Activated naive CD4-positive, alpha-beta T cell treated with anti-CD3 and anti-CD28 coated beads for 36 hours (primary cell): ENCODE measurements at regions of chr9 and their contacts with region 1.

Region 1: DNA sequence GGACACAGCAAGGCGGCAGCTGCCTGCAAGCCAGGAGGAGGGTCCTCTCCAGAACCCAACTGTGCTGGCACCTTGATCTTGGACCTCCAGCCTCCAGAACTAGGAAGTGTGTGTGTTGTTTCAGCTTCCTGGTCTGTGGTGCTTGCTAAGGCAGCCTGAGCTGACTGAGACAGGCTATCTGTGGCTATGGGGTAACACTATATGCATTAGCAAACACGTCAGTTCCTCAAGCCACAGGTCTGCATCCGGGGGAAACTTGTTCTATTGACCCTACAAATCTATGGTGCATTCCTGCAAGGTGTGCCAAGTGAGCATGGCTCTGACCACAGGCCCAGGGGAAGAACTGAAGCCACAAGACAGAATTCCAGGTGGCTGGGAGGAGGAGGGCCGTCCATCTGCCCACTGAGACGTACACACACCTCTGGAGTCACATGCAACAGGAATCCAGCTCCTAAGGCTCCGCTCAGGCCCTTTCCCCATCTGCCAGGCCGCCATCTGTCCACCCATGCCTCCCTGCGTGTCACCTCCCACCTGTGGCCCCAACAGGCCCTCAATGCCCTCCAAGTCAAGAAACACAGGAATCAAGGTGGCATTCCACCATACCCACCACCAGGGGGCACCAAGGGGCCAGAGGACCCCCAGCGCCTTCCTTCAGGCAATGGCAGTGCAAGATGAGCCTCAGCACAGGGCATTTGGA is 174.9 kb downstream of the ROR2 start:
- DNase-seq: peak; percentile 78
- H3K4me3 Mint-ChIP-seq: no peak overlapping the region
- H3K27ac Mint-ChIP-seq: no peak overlapping the region
- H3K4me1 Mint-ChIP-seq: no peaks in the 10 kb centered on the region
- H3K27me3 Mint-ChIP-seq: peaks cover 11% of the 10 kb centered on the region

Region 2: DNA sequence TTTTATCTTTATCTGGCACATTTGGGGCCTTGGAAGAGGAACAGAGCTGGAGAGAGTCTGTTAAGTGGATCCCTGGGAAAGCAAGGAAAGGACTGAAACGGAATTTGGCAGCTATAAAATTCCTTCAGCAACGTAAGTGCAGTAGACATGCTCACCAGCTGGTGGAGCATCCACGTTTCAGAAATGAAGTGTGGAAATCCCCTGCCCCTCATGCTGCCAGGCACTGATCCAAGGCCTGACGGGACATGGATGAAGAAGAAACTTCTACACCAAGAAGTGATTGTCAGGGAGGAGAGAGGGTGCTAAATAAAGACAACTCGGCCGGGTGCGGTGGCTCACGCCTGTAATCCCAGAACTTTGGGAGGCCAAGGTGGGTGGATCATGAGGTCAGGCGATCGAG is 34.5 kb before region 1 on chr9:
- CTCF ChIA-PET with region 1: no interaction called
- intact Hi-C with region 1: no loop called
- DNase-seq: no peak
- H3K4me3 Mint-ChIP-seq: no peak overlapping the region
- H3K27ac Mint-ChIP-seq: no peak overlapping the region
- H3K4me1 Mint-ChIP-seq: no peaks in the 10 kb centered on the region
- H3K27me3 Mint-ChIP-seq: no peaks in the 10 kb centered on the region

Region 3: GRCh38 chr9:91949946-91950664 is 174.9 kb after region 1 on chr9 and contains the start of gene ROR2:
- CTCF ChIA-PET with region 1: interaction called, 3 read pairs
- intact Hi-C with region 1: loop called (anchors 2 kb)
- DNase-seq: peak; percentile 37
- H3K4me3 Mint-ChIP-seq: no peak within 1 kb of the TSS
- H3K27ac Mint-ChIP-seq: no peak within 1 kb of the TSS
- H3K4me1 Mint-ChIP-seq: peaks cover 4% of the 10 kb centered on the region
- H3K27me3 Mint-ChIP-seq: peaks cover 59% of the 10 kb centered on the region
- total RNA-seq, gene ROR2: not detected